ENCODE measurements at regions of chr17 and their contacts with region 1.

Region 1: GRCh38 chr17:385926-386876 is 33.6 kb upstream of the RPH3AL start:
- DNase-seq: peak; percentile 12 to 81 (median 68)
- ATAC-seq: peak; percentile 55
- H3K4me3 ChIP-seq: no peak overlapping the region
- H3K4me3 Mint-ChIP-seq: peak overlapping the region; percentile 87
- H3K27ac ChIP-seq: no peak overlapping the region
- H3K27ac Mint-ChIP-seq: no peak overlapping the region
- H3K4me1 ChIP-seq: peaks cover 15% of the 10 kb centered on the region
- H3K4me1 Mint-ChIP-seq: peaks cover 36% of the 10 kb centered on the region
- H3K27me3 ChIP-seq: peaks cover 0 to 3% of the 10 kb centered on the region in 2 experiments
- H3K27me3 Mint-ChIP-seq: peaks cover 6% of the 10 kb centered on the region
- CTCF ChIP-seq: peak; percentile 34

Region 2: DNA sequence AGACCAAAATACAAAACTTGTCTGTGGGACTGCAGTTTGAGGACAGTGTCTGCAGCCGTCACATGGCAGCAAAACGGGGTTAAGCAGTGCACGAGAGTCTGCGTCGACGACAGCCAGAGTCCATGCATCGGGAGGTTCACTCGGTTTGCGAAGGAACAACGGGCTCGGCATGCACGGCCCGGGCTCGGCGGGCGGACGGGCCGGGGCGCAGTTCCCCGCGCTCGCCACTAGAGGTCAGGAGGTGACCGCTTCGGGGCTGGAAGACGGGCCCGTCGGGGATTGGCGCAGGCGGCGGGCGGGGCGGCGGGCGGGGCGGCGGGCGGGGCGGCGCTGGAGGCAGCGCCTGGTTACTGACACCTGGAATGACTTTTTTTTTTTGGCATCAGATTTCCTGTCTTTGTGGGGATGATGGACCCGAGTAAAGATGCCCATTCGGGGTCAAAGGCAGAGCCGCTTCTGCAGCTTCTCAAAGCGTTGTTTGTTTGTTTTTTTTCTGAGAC is 242.4 kb before region 1 on chr17:
- CTCF ChIA-PET with region 1: no interaction called
- POLR2A ChIA-PET with region 1: no interaction called
- intact Hi-C with region 1: loop called in 1 of 2 experiments (anchors 2 kb)
- DNase-seq: peak; percentile 69 to 92 (median 84)
- ATAC-seq: peak; percentile 97
- H3K4me3 ChIP-seq: no peak overlapping the region
- H3K4me3 Mint-ChIP-seq: no peak overlapping the region
- H3K27ac ChIP-seq: no peak overlapping the region
- H3K27ac Mint-ChIP-seq: no peak overlapping the region
- H3K4me1 ChIP-seq: peaks cover 5% of the 10 kb centered on the region
- H3K4me1 Mint-ChIP-seq: no peaks in the 10 kb centered on the region
- H3K27me3 ChIP-seq: no peaks in the 10 kb centered on the region
- H3K27me3 Mint-ChIP-seq: no peaks in the 10 kb centered on the region
- CTCF ChIP-seq: peak; percentile 86

Region 3: GRCh38 chr17:700504-701094 is 314.4 kb after region 1 on chr17:
- CTCF ChIA-PET with region 1: no interaction called
- POLR2A ChIA-PET with region 1: no interaction called
- intact Hi-C with region 1: loop called in 1 of 2 experiments (anchors 10 kb)
- DNase-seq: peak in 3 of 14 experiments; percentile 65 to 76 (median 67)
- ATAC-seq: peak; percentile 68
- H3K4me3 ChIP-seq: no peak overlapping the region
- H3K4me3 Mint-ChIP-seq: no peak overlapping the region
- H3K27ac ChIP-seq: no peak overlapping the region
- H3K27ac Mint-ChIP-seq: no peak overlapping the region
- H3K4me1 ChIP-seq: no peaks in the 10 kb centered on the region
- H3K4me1 Mint-ChIP-seq: no peaks in the 10 kb centered on the region
- H3K27me3 ChIP-seq: no peaks in the 10 kb centered on the region
- H3K27me3 Mint-ChIP-seq: no peaks in the 10 kb centered on the region
- CTCF ChIP-seq: peak; percentile 78